ENCODE measurements at regions of chr14 and their contacts with region 1.

Region 1: GRCh38 chr14:91154851-91155625 is 41.2 kb downstream of the DGLUCY start:
- DNase-seq: peak in 1 of 2 donors; percentile 68
- ATAC-seq: peak in 3 of 4 donors; percentile 42 to 68 (median 63)
- H3K4me3 ChIP-seq: no peak overlapping the region
- H3K27ac ChIP-seq: peak overlapping the region; percentile 79
- H3K4me1 ChIP-seq: peaks cover 46% of the 10 kb centered on the region
- H3K27me3 ChIP-seq: no peaks in the 10 kb centered on the region
- CTCF ChIP-seq: no peak

Region 2: DNA sequence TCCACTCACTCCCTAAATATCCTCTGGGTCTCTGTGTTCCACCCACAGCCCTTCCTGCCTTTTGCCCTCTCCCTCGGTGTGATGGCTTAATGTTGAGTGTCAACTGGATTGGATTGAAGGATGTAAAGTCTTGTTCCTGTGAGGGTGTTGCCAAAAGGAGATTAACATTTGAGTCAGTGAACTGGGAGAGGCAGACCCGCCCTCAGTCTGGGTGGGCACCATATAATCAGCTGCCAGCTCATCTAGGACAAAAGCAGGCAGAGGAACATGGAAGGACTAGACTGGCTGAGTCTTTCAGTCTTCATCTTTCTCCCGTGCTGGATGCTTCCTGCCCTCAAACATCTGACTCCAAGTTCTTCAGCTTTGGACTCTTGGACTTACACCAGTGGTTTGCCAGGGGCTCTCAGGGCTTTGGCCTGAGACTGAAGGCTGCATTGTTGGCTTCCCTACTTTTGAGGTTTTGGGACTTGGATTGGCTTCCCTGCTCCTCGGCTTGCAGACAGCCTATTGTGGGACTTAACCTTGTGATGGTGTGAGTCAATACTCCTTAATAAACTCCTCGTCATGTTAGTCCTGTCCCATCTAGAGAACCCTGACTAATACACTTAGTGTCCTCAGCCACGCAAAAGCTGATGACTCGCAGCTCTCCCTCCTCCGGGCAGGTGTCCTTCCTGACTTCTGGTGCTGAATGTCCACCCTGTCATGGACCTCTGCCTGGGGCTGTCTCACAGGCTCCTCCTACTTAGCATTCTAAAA is 35.3 kb before region 1 on chr14:
- intact Hi-C with region 1: loop called (anchors 5 kb)
- DNase-seq: peak; percentile 65 to 80
- ATAC-seq: peak; percentile 92 to 96 (median 94)
- H3K4me3 ChIP-seq: no peak overlapping the region
- H3K27ac ChIP-seq: peak overlapping the region; percentile 90
- H3K4me1 ChIP-seq: peaks cover 72% of the 10 kb centered on the region
- H3K27me3 ChIP-seq: no peaks in the 10 kb centered on the region
- CTCF ChIP-seq: no peak

Measured in psoas muscle (tissue), 8 donors.